KBM-7 (cell line): ENCODE measurements at regions of chr15 and their contacts with region 1.

Region 1: GRCh38 chr15:101008158-101009139 is 89.3 kb downstream of the LRRK1 start:
- DNase-seq: peak; percentile 63

Region 2: GRCh38 chr15:100635406-100636071 is 372.9 kb before region 1 on chr15:
- in situ Hi-C with region 1: loop called (anchors 10 kb)
- DNase-seq: no peak

Region 3: GRCh38 chr15:101326462-101327135 is 318.1 kb after region 1 on chr15:
- in situ Hi-C with region 1: no loop called
- DNase-seq: no peak